ENCODE measurements at regions of chr7 and their contacts with region 1.

Region 1: DNA sequence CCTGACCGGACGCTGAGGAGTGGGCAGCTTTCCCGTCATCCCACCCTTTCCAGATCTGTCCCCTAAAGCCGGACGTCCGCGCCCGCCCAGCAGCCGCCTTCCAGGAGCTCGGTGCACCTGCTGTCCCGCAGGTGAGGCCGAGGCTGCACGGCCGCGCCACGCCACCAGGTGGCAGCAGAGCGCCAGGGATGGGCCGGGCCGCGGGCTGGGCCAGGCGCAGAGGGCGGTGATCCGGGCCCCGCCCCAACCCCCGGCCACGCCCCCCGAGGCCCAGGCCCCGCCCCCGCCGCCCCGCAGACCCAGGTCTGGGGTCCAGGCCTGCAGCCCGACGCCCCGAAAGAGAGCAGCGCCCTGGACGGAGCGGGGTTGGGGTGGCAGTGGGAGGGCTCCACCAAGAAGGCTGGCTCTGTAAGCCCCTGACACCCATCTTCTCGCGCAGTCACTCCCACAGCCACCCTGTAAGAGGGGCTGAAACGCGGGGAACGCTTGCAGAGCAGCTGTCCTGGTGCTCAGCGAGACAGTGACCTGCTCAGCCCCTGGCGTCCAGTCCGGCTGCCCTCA is 32.2 kb downstream of the FOXL3 start:
- DNase-seq: peak; percentile 66
- H3K4me3 ChIP-seq: no peak overlapping the region
- H3K27ac ChIP-seq: no peak overlapping the region
- H3K4me1 ChIP-seq: no peaks in the 10 kb centered on the region
- H3K27me3 ChIP-seq: peaks cover 46% of the 10 kb centered on the region

Region 2: GRCh38 chr7:171364-171904 is 150.8 kb before region 1 on chr7:
- in situ Hi-C with region 1: no loop called
- DNase-seq: no peak
- H3K4me3 ChIP-seq: no peak overlapping the region
- H3K27ac ChIP-seq: no peak overlapping the region
- H3K4me1 ChIP-seq: no peaks in the 10 kb centered on the region
- H3K27me3 ChIP-seq: peaks cover 16% of the 10 kb centered on the region

Region 3: DNA sequence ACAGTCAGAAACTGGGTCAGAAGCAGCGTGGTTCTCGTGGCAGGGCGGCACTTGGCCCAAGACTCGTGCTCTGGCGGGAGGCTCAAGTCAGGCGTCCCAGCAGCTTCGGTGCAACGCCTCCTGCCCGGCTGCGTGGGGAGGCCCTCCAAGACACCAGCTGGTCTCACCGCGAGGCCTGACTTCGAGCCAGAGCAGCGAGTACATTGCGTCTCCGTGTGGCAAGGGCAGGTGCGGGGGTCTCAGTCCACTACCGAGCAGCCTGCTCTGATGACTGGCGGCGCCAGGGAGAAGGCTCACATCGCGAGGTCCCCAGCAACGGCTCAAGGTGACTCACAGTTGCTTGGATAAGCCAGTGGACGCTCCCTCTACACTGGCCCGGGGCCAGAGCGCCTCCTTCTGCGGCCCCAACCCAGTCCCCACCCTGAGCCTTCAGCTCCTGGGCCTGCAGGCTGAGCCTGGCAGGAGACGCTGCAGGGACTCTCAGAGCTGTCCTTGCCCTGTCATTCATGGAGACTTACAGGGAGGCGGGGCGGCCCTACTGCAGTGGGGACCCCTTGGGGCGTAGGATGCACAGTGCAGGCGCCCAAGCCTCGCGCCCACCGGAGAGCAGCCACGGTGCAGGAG is 446.8 kb after region 1 on chr7:
- in situ Hi-C with region 1: loop called (anchors 5 kb)
- DNase-seq: no peak
- H3K4me3 ChIP-seq: no peak overlapping the region
- H3K27ac ChIP-seq: no peak overlapping the region
- H3K4me1 ChIP-seq: no peaks in the 10 kb centered on the region
- H3K27me3 ChIP-seq: no peaks in the 10 kb centered on the region